Activated B cell treated with CpG ODN at 0.5 μM for 24 hours (primary cell): ENCODE measurements at regions of chr22 and their contacts with region 1.

Region 1: DNA sequence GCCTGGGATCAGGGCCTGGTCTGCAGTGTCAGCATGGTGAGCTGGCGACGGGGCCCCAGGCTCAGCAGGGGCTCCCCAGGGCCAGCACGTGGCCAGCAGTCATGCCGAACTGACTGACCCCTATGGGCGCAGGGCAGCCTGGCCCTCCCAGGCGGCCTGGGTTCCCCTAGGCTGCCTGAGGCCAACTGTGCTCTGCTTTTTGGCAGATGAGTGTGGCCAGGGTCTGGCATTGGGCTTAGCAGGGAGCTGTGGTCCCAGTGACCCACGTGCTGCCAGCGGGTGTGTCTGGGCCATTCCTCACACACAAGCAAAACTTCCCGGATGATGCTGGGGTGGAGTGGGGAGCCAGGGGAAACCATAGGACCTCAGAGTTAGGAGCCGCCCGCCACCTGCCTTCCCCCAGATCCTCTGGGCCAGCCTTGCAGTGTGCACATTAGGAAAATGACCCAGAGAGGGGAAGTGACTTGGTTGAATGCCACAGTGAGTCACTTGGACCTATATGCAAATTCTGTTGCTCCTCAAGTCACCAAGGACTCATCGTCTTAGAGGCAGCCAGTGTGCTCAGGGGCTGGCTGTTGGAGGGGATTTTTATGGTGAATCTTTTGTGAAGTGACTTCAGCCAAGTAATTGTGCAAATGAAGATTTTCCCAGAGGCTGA is 6.5 kb downstream of the ADORA2A start:
- DNase-seq: peak; percentile 57
- ATAC-seq: peak; percentile 69
- H3K4me3 Mint-ChIP-seq: peak overlapping the region; percentile 78
- H3K27ac Mint-ChIP-seq: peak overlapping the region; percentile 99
- H3K4me1 Mint-ChIP-seq: peaks cover 98% of the 10 kb centered on the region
- H3K27me3 Mint-ChIP-seq: no peaks in the 10 kb centered on the region
- CTCF ChIP-seq: no peak

Region 2: GRCh38 chr22:23144932-23145873 is 1288.7 kb before region 1 on chr22 and contains the start of gene RAB36:
- CTCF ChIA-PET with region 1: no interaction called
- POLR2A ChIA-PET with region 1: no interaction called
- intact Hi-C with region 1: loop called (anchors 5 kb)
- DNase-seq: peak; percentile 91
- ATAC-seq: peak; percentile 65
- H3K4me3 Mint-ChIP-seq: peak within 1 kb of the TSS; percentile 81
- H3K27ac Mint-ChIP-seq: peak within 1 kb of the TSS; percentile 86
- H3K4me1 Mint-ChIP-seq: peaks cover 56% of the 10 kb centered on the region
- H3K27me3 Mint-ChIP-seq: no peaks in the 10 kb centered on the region
- CTCF ChIP-seq: no peak
- total RNA-seq, gene RAB36: 1.7 and 2.1 TPM in 2 replicates

Region 3: GRCh38 chr22:23838681-23839468 is 595.1 kb before region 1 on chr22 and contains the start of gene DERL3:
- CTCF ChIA-PET with region 1: no interaction called
- POLR2A ChIA-PET with region 1: no interaction called
- intact Hi-C with region 1: loop called (anchors 10 kb)
- DNase-seq: peak; percentile 95
- ATAC-seq: peak; percentile 82
- H3K4me3 Mint-ChIP-seq: peak within 1 kb of the TSS; percentile 88
- H3K27ac Mint-ChIP-seq: peak within 1 kb of the TSS; percentile 95
- H3K4me1 Mint-ChIP-seq: peaks cover 75% of the 10 kb centered on the region
- H3K27me3 Mint-ChIP-seq: no peaks in the 10 kb centered on the region
- CTCF ChIP-seq: no peak
- total RNA-seq, gene DERL3: 15.4 and 18.3 TPM in 2 replicates

Region 4: GRCh38 chr22:24367841-24368240 is 66.1 kb before region 1 on chr22:
- CTCF ChIA-PET with region 1: no interaction called
- POLR2A ChIA-PET with region 1: no interaction called
- intact Hi-C with region 1: no loop called
- DNase-seq: no peak
- ATAC-seq: no peak
- H3K4me3 Mint-ChIP-seq: no peak overlapping the region
- H3K27ac Mint-ChIP-seq: no peak overlapping the region
- H3K4me1 Mint-ChIP-seq: no peaks in the 10 kb centered on the region
- H3K27me3 Mint-ChIP-seq: no peaks in the 10 kb centered on the region
- CTCF ChIP-seq: no peak

Region 5: DNA sequence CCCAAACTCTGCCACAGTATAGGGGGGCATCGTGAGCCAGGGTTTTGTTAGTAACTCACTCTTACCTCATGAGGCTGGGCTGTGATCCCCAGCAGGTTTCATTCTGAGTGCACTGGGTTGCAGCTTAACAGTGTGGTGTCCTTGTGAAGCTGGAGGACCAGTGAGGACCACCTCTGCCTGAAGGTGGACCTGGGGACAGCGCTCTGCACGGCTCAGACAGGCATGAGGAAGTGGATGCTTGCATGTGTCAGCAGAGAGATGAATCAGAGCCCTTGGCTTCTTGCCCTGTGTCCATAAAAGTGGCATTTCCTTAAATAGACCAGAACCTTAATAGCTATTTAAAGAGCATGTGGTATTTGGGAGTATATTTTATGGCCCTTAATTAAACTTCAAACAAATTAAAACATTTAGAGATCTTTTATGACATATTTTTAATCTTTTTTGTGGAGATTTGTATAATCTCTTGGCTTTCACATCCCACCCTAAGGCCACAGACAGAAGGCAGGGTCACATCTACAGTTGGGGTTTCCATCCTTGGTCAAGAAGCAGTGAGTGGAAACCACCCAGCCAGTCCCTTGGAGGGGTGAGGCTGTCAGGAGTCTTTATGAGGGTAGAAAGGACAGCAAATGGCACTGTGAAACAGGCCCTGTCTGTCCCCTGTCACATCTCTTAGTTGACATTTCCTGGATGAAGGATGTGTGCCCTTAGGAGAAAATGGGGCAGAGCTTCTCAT is 31.3 kb before region 1 on chr22:
- CTCF ChIA-PET with region 1: no interaction called
- POLR2A ChIA-PET with region 1: interaction called, 11 read pairs
- intact Hi-C with region 1: loop called (anchors 1 kb)
- DNase-seq: no peak
- ATAC-seq: peak; percentile 60
- H3K4me3 Mint-ChIP-seq: peak overlapping the region; percentile 57
- H3K27ac Mint-ChIP-seq: peak overlapping the region; percentile 82
- H3K4me1 Mint-ChIP-seq: peaks cover 88% of the 10 kb centered on the region
- H3K27me3 Mint-ChIP-seq: no peaks in the 10 kb centered on the region
- CTCF ChIP-seq: no peak

Region 6: GRCh38 chr22:24445481-24446259 is 11.7 kb after region 1 on chr22:
- CTCF ChIA-PET with region 1: no interaction called
- POLR2A ChIA-PET with region 1: interaction called, 8 read pairs
- intact Hi-C with region 1: loop called (anchors 1 kb)
- DNase-seq: no peak
- ATAC-seq: peak; percentile 84
- H3K4me3 Mint-ChIP-seq: no peak overlapping the region
- H3K27ac Mint-ChIP-seq: no peak overlapping the region
- H3K4me1 Mint-ChIP-seq: peaks cover 41% of the 10 kb centered on the region
- H3K27me3 Mint-ChIP-seq: no peaks in the 10 kb centered on the region
- CTCF ChIP-seq: no peak

Region 7: DNA sequence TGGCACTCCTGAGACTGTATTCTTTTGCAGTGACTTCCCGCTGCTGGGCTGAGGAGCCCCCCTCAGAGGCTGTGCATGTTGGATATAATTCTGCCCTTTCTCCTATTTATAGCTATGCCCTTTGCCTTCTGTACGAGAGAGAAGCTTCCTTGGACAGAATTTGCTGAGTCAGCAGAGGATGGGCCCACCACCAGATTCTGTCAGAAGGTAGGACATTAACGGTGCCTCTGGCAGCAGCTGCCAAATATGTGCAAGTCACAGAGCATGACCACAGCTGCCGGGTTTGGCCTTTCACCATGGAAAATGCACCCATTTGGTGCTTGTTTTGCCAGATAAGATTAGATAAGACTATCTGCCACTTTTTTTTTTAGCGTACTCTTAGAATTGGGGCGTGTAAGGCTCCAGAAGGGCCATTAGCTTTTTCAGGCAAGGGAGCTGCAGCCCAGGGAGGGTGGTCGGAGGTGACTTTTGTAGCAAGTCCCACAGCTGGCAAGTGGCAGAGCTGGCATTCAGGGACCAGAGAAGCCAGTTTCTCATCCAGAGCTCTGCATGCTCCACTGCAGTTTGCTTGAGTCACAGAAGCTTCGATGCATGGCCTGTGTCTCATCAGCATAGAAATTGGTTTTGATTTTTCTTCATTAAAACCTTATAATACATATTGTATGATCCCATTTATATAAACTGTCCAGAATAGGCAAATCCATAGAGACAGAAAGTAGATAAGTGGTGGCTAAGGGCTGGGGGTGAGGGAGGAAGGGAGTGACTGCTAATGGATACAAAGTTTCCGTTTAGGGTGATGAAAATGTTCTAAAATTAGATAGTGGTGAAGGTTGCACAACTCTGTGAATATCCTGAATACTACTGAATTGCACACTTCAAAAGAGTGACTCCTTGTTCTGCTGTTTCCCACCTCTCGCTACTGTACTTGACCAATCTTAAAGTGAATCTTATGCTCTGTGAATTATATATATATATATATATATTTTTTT is 77.0 kb after region 1 on chr22:
- CTCF ChIA-PET with region 1: interaction called, 7 read pairs
- POLR2A ChIA-PET with region 1: interaction called, 5 read pairs
- intact Hi-C with region 1: loop called (anchors 2 kb)
- DNase-seq: no peak
- ATAC-seq: peak; percentile 60
- H3K4me3 Mint-ChIP-seq: peak overlapping the region; percentile 45
- H3K27ac Mint-ChIP-seq: peak overlapping the region; percentile 67
- H3K4me1 Mint-ChIP-seq: peaks cover 61% of the 10 kb centered on the region
- H3K27me3 Mint-ChIP-seq: no peaks in the 10 kb centered on the region
- CTCF ChIP-seq: no peak